Esophagus muscularis mucosa (tissue), 4 donors: ENCODE measurements at regions of chr18 and their contacts with region 1.

Region 1: GRCh38 chr18:26548429-26549262 is at the start of gene KCTD1:
- DNase-seq: no peak
- H3K4me3 ChIP-seq: peak within 1 kb of the TSS; percentile 66 to 92 (median 74)
- H3K27ac ChIP-seq: peak within 1 kb of the TSS; percentile 73 to 83 (median 78)
- H3K4me1 ChIP-seq: peaks cover 36 to 67% (median 61%) of the 10 kb centered on the region in 4 donors
- H3K27me3 ChIP-seq: peaks cover 0 to 35% (median 9%) of the 10 kb centered on the region in 4 donors
- CTCF ChIP-seq: no peak
- EP300 ChIP-seq: no peak
- POLR2A ChIP-seq: no peak
- total RNA-seq, gene KCTD1: 7.1 to 17.6 (median 12.7) TPM

Region 2: GRCh38 chr18:26383454-26384270 is 165.0 kb before region 1 on chr18:
- intact Hi-C with region 1: loop called (anchors 10 kb)
- DNase-seq: no peak
- H3K4me3 ChIP-seq: no peak overlapping the region
- H3K27ac ChIP-seq: no peak overlapping the region
- H3K4me1 ChIP-seq: peaks cover 6 to 19% (median 15%) of the 10 kb centered on the region in 4 donors
- H3K27me3 ChIP-seq: no peaks in the 10 kb centered on the region
- CTCF ChIP-seq: peak; percentile 63 to 81 (median 81)
- EP300 ChIP-seq: no peak
- POLR2A ChIP-seq: no peak

Region 3: GRCh38 chr18:26654616-26655524 is 106.2 kb after region 1 on chr18:
- intact Hi-C with region 1: loop called (anchors 5 kb)
- DNase-seq: no peak
- H3K4me3 ChIP-seq: peak overlapping the region; percentile 85 to 90 (median 86)
- H3K27ac ChIP-seq: peak overlapping the region; percentile 84 to 96 (median 90)
- H3K4me1 ChIP-seq: peaks cover 20 to 39% (median 36%) of the 10 kb centered on the region in 4 donors
- H3K27me3 ChIP-seq: no peaks in the 10 kb centered on the region
- CTCF ChIP-seq: no peak
- EP300 ChIP-seq: no peak
- POLR2A ChIP-seq: no peak